ENCODE measurements at regions of chr15 and their contacts with region 1.

Region 1: DNA sequence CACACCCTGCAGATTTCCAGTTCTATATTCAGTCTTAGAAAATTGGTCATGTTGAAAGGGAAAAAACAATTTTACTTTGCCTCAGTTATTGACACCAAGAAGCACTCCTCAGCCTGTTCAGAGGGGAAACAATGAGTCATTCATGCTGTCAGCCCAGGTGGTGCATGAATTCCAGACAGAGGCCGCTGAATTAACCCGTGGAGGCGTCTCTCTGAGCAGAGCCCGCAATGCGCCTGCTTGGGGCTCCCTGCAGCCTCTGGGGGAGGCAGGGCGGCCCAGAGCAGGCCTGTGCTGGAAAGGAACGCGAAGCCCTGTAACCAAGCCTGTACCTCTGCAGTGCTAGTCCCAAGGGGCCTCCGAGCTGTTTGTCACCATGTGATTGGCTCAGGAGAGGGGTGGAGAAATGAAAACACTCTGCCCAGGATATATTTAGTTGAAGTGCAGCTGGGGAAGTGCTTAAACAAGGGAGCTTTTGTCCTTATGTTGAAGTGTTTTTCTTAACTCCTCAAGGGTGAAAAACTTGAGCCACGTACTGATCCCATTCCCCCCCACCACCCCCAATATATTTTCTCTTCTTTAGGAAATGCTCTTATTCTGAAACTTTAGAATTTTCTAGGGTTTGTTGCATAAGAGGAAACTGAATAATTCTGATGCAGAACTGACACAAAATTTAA is 68.3 kb upstream of the CHD2 start:
- DNase-seq: peak; percentile 98
- ATAC-seq: peak; percentile 100
- H3K4me3 ChIP-seq: peak overlapping the region; percentile 52 to 55 (median 54)
- H3K27ac ChIP-seq: peak overlapping the region; percentile 95
- H3K4me1 ChIP-seq: peaks cover 37% of the 10 kb centered on the region
- H3K27me3 ChIP-seq: no peaks in the 10 kb centered on the region
- CTCF ChIP-seq: peak; percentile 31
- EP300 ChIP-seq: peak; percentile 54 to 67; a peak in 3 of 4 replicates
- POLR2A ChIP-seq: peak; percentile 86 to 93
- RAD21 ChIP-seq: peak; percentile 69

Region 2: DNA sequence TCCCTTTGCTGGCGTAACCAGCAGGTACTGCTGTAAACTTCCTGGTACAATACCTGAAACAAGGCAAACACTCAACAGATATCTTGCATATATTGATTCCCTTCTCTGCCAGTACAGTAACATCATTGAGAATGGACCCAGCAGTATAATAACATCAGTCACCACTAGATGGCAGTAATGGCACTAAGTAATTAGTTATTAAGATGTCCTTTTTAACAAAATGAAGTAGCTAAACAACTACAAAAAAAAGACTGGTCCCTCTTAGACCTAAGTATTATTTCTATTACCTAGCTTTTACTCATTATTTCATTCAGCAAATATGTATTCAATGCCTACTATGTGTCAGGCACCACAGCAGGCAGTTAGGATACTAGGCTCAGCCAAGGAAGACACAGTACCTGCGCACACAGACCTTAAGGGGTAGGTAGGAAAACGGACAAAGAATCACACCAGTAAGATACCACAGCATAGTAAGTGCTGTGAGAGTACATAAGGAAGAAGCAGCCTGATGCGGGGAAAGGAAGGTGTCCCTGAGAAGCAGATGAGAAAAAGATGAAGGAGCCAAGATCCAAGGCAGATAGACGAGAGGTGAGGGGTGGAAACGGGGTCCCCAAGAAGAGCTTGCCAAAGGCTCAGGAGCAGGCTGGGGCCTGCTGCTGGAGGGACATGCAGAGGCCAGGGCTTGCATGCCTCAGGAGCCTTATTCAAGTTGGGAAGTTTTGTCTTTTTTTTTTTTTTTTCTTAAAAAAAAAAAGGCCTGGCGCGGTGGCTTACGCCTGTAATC is 34.4 kb before region 1 on chr15:
- CTCF ChIA-PET with region 1: interaction called, 3 read pairs
- POLR2A ChIA-PET with region 1: interaction called, 15 read pairs
- in situ Hi-C with region 1: no loop called
- intact Hi-C with region 1: no loop called
- DNase-seq: peak; percentile 78
- ATAC-seq: peak; percentile 27
- H3K4me3 ChIP-seq: peak overlapping the region in 2 of 3 experiments; percentile 46 to 65; a peak in 1 of 6 replicates
- H3K27ac ChIP-seq: peak overlapping the region; percentile 15
- H3K4me1 ChIP-seq: peaks cover 46% of the 10 kb centered on the region
- H3K27me3 ChIP-seq: no peaks in the 10 kb centered on the region
- CTCF ChIP-seq: peak; percentile 74
- EP300 ChIP-seq: no peak
- POLR2A ChIP-seq: no peak
- RAD21 ChIP-seq: peak; percentile 27; the same call in 1 of the 2 replicates

Region 3: GRCh38 chr15:92803847-92804609 is 27.8 kb before region 1 on chr15:
- CTCF ChIA-PET with region 1: no interaction called
- POLR2A ChIA-PET with region 1: interaction called, 122 read pairs
- in situ Hi-C with region 1: no loop called
- intact Hi-C with region 1: no loop called
- DNase-seq: peak; percentile 100
- ATAC-seq: peak; percentile 90
- H3K4me3 ChIP-seq: peak overlapping the region in 1 of 3 experiments; percentile 18; a peak in 2 of 6 replicates
- H3K27ac ChIP-seq: peak overlapping the region; percentile 90
- H3K4me1 ChIP-seq: peaks cover 63% of the 10 kb centered on the region
- H3K27me3 ChIP-seq: no peaks in the 10 kb centered on the region; a peak in 1 of 5 replicates
- CTCF ChIP-seq: no peak
- EP300 ChIP-seq: peak; percentile 94 to 97
- POLR2A ChIP-seq: peak; percentile 27 to 48; a peak in 2 of 4 replicates
- RAD21 ChIP-seq: no peak

Region 4: DNA sequence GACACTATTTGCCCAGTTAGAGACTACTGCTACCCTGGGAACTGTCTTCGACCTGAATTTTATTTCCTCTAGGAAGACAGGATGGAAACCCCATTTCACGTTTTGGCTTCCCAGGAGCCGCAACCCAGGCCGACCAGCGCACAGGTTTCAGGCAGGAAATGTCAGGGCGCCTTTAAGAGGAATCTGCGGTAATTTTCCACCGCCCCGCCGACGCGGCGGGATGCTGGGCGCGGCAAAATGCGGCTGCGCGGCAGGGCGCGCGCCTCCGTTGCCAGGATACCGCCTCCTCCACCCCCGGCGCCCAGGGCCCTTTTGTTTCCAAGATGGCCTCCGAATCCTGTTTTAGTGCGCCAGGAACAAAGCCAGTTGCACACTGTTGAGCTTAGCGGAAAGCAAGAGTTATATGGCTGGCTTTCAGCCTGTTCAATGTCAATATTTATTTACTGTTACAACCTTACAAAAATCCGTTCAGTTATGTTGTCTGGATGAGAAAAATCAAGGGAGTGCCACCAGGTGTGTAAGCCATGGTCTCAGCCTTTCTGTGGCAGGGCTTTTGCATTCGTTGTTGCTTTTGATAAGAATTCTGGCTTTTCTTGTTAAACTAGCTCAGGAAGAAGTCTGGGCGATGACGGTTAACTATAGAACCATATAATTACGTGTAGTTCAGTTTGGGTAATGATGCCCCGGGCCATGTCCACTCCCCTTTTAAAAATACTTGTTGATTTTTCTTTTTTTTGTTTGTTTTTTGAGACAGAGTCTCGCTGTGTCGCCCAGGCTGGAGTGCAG is 11.4 kb before region 1 on chr15:
- CTCF ChIA-PET with region 1: no interaction called
- POLR2A ChIA-PET with region 1: interaction called, 75 read pairs
- in situ Hi-C with region 1: no loop called
- intact Hi-C with region 1: no loop called
- DNase-seq: peak; percentile 84
- ATAC-seq: peak; percentile 92
- H3K4me3 ChIP-seq: peak overlapping the region; percentile 41 to 67 (median 65)
- H3K27ac ChIP-seq: peak overlapping the region; percentile 95
- H3K4me1 ChIP-seq: peaks cover 62% of the 10 kb centered on the region
- H3K27me3 ChIP-seq: no peaks in the 10 kb centered on the region
- CTCF ChIP-seq: no peak
- EP300 ChIP-seq: peak in 1 of 2 experiments; percentile 73; a peak in 1 of 4 replicates
- POLR2A ChIP-seq: peak; percentile 68 to 93
- RAD21 ChIP-seq: no peak

Region 5: DNA sequence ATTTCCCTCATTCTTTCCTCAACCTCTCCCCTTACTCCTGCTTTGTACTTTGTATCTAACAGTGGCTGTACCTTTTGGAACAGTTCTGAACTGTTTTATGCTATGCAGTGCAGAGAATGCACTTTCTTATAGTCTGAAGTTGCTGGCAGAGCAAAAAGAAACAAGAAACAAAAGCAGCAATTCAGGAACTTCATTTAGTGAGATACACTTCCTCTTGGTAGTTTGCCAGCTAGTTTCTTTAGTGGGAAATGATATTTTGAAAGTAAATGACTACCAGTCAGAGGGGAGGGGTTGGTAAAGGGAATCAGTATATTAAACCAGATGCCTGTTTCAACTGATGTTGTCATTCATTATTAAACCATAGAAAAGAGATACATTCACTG is 13.3 kb after region 1 on chr15:
- CTCF ChIA-PET with region 1: no interaction called
- POLR2A ChIA-PET with region 1: interaction called, 14 read pairs
- in situ Hi-C with region 1: no loop called
- intact Hi-C with region 1: no loop called
- DNase-seq: peak; percentile 28
- ATAC-seq: peak; percentile 65; the same call in 2 of the 3 replicates
- H3K4me3 ChIP-seq: peak overlapping the region in 2 of 3 experiments; percentile 22 to 33; a peak in 1 of 6 replicates
- H3K27ac ChIP-seq: peak overlapping the region; percentile 34
- H3K4me1 ChIP-seq: peaks cover 57% of the 10 kb centered on the region
- H3K27me3 ChIP-seq: no peaks in the 10 kb centered on the region
- CTCF ChIP-seq: no peak
- EP300 ChIP-seq: no peak
- POLR2A ChIP-seq: no peak
- RAD21 ChIP-seq: no peak

Region 6: DNA sequence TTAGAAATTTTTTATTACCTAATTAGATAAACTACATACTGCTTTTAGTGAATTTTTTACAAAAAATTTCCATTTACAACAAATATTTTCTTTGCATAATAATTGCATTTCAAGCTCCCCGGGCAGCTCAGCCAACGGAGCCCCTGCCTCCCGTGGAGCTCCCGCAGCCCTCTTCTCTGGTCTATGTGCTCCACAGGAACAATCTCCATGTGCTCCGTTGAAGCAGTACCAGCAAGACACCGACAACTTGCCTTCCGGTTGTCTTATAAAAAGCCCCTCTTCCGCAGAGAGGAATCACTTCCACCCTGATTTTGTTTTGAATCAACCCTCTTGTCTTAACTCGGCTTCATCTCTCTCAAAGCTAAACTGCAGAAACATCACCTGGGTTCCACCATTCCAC is 21.4 kb after region 1 on chr15:
- CTCF ChIA-PET with region 1: no interaction called
- POLR2A ChIA-PET with region 1: interaction called, 10 read pairs
- in situ Hi-C with region 1: no loop called
- intact Hi-C with region 1: no loop called
- DNase-seq: no peak
- ATAC-seq: no peak
- H3K4me3 ChIP-seq: no peak overlapping the region
- H3K27ac ChIP-seq: no peak overlapping the region
- H3K4me1 ChIP-seq: peaks cover 17% of the 10 kb centered on the region
- H3K27me3 ChIP-seq: no peaks in the 10 kb centered on the region
- CTCF ChIP-seq: no peak
- EP300 ChIP-seq: no peak
- POLR2A ChIP-seq: no peak
- RAD21 ChIP-seq: no peak

Region 7: GRCh38 chr15:92903941-92904831 is 72.4 kb after region 1 on chr15:
- CTCF ChIA-PET with region 1: no interaction called
- POLR2A ChIA-PET with region 1: interaction called, 65 read pairs
- in situ Hi-C with region 1: no loop called
- intact Hi-C with region 1: no loop called
- DNase-seq: peak; percentile 96
- ATAC-seq: peak; percentile 90
- H3K4me3 ChIP-seq: peak overlapping the region; percentile 88 to 90 (median 89)
- H3K27ac ChIP-seq: peak overlapping the region; percentile 100
- H3K4me1 ChIP-seq: peaks cover 47% of the 10 kb centered on the region
- H3K27me3 ChIP-seq: no peaks in the 10 kb centered on the region; a peak in 1 of 5 replicates
- CTCF ChIP-seq: no peak; the same call in 1 of the 2 replicates
- EP300 ChIP-seq: peak in 1 of 2 experiments; percentile 54; a peak in 1 of 4 replicates
- POLR2A ChIP-seq: peak; percentile 85 to 99
- RAD21 ChIP-seq: peak; percentile 75

Measured in HepG2 (cell line).